ENCODE measurements at regions of chr1 and their contacts with region 1.

Region 1: DNA sequence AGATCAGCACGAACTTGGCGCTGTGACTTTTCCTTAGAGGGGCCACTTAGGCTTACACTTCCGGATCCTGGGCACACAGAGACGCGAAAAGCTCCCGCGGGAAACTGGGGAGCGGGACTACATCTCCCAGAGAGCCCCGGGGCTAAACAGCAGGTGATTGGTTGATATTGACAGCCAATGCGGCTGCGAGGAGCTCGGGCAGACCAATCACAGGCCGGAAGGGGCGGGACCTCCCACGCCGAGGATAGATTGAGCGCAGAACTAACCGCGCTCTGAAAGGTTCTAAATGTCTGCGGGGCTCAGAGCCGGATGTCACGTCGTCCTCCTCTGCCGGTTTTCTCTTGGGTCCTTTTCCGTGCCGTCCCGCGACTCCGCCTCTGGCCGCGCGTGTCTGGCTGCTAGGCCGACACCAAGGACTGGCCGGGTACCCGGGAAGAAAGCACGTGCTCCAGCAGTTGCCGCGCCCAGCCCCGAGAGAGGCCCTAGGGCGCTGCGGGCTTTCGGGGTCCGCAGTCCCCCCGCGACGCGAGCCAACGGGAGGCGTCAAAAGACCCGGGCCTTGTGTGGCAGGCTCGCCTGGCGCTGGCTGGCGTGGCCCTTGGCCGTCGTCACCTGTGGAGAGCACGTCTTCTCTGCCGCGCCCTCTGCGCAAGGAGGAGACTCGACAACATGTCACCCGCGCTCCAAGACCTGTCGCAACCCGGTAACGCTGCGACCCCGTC is at the start of gene MTR:
- DNase-seq: peak; percentile 97
- ATAC-seq: peak; percentile 99
- H3K4me3 Mint-ChIP-seq: peak within 1 kb of the TSS; percentile 90
- H3K27ac Mint-ChIP-seq: peak within 1 kb of the TSS; percentile 87
- H3K4me1 Mint-ChIP-seq: peaks cover 19% of the 10 kb centered on the region
- H3K27me3 Mint-ChIP-seq: peaks cover 24% of the 10 kb centered on the region
- CTCF ChIP-seq: no peak
- total RNA-seq, gene MTR: 27.5 to 36.1 TPM (median 34.5 TPM) in 3 replicates

Region 2: DNA sequence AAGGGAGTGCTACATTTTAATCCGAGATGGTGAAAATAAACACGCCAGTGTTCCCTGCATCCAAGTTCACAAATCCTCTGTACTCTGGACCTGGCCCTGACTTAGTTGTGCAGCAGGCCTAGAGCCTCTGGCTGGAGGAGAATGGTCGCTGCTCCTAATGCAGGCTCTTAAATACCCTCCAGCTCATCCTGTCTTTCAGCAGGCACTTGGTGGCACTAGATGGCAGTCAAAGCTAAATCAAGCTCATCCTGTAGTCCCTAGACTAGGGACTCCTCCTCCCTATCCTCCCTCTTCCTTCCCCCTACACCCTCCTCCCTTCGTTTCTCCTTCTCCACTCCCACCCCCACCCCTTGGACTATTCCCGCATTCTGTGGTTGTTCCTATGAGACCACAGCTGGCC is 41.7 kb before region 1 on chr1:
- CTCF ChIA-PET with region 1: interaction called, 12 read pairs
- POLR2A ChIA-PET with region 1: interaction called, 12 read pairs
- DNase-seq: peak; percentile 30
- ATAC-seq: peak; percentile 99
- H3K4me3 Mint-ChIP-seq: no peak overlapping the region
- H3K27ac Mint-ChIP-seq: no peak overlapping the region
- H3K4me1 Mint-ChIP-seq: no peaks in the 10 kb centered on the region
- H3K27me3 Mint-ChIP-seq: no peaks in the 10 kb centered on the region
- CTCF ChIP-seq: no peak

Region 3: GRCh38 chr1:236759252-236759859 is 35.8 kb before region 1 on chr1:
- CTCF ChIA-PET with region 1: interaction called, 10 read pairs
- POLR2A ChIA-PET with region 1: no interaction called
- DNase-seq: no peak
- ATAC-seq: peak; percentile 58
- H3K4me3 Mint-ChIP-seq: no peak overlapping the region
- H3K27ac Mint-ChIP-seq: no peak overlapping the region
- H3K4me1 Mint-ChIP-seq: no peaks in the 10 kb centered on the region
- H3K27me3 Mint-ChIP-seq: no peaks in the 10 kb centered on the region
- CTCF ChIP-seq: peak; percentile 69

Region 4: DNA sequence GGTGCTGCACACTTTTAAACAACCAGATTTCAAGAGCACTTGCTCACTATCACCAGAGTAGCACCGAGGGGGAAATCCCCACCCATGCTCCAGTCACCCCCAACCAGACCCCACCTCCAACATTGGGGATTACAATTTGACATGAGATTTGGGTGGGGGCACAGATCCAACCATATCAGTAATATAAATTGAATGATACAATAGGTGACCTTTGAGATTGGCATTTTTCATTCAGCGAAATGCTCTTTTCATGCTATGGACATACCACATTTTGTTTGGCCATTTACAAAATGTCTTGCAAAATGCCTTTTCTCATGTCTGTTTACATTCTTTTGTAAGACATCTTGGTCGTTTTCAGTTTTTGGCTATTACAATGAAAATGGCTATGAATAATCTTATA is 270.7 kb after region 1 on chr1:
- CTCF ChIA-PET with region 1: no interaction called
- POLR2A ChIA-PET with region 1: no interaction called
- DNase-seq: no peak
- ATAC-seq: no peak
- H3K4me3 Mint-ChIP-seq: no peak overlapping the region
- H3K27ac Mint-ChIP-seq: no peak overlapping the region
- H3K4me1 Mint-ChIP-seq: peaks cover 29% of the 10 kb centered on the region
- H3K27me3 Mint-ChIP-seq: no peaks in the 10 kb centered on the region; the same call in 1 of the 2 replicates
- CTCF ChIP-seq: no peak